Activated CD4-positive, alpha-beta T cell treated with anti-CD3 and anti-CD28 coated beads, Interleukin-2, amount 10 ng/mL, durations not matched to agents 24 days and 14 days (primary cell): ENCODE measurements at regions of chr2 and their contacts with region 1.

Region 1: GRCh38 chr2:12716282-12717190 is at the start of gene TRIB2:
- DNase-seq: peak; percentile 96
- H3K4me3 Mint-ChIP-seq: peak within 1 kb of the TSS; percentile 92
- H3K27ac Mint-ChIP-seq: peak within 1 kb of the TSS; percentile 90
- H3K4me1 Mint-ChIP-seq: peaks cover 54% of the 10 kb centered on the region
- H3K27me3 Mint-ChIP-seq: peaks cover 5% of the 10 kb centered on the region
- total RNA-seq, gene TRIB2: 4.0 and 5.1 TPM in 2 replicates

Region 2: DNA sequence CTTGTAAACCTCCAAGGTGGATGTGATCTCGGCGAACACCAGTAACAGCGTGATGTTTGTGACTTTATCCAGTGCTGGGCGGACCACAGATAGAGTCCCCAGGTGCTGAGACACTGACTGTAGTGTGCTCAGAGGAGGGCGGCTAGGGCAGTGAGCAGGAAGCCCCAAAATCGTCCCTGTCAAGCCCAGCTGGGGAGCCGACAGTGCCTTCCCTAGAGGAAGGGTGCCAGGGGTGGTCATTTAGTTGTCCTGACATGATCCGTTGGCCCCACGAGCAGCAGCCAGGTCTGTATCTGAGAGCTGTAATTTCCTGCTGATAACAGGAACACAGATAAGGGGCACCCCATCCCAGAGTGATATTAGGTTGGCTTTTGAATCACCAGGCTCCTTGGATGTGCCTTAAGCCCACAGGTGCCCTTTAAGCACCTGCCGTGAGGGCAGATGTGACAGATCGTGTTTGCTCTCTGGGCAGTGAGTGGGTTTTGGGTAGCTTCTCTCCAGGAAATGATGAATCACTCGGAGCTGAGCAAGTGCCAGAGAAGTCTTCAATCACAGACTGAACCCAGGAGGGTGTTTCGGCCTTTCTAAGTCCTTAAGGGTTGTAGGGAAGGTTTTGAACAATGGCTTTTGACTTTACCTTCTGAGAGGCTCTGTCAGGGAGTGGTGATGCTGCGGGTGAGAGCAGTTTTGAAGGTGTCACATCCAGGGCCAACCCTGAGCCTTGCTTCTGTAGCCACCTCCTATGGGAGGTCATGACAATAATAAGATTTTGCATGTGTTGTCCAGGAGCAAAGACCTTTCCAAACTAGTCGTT is 962.4 kb before region 1 on chr2:
- intact Hi-C with region 1: loop called (anchors 5 kb)
- DNase-seq: peak; percentile 87
- H3K4me3 Mint-ChIP-seq: peak overlapping the region; percentile 80
- H3K27ac Mint-ChIP-seq: peak overlapping the region; percentile 89
- H3K4me1 Mint-ChIP-seq: peaks cover 71% of the 10 kb centered on the region
- H3K27me3 Mint-ChIP-seq: no peaks in the 10 kb centered on the region

Region 3: DNA sequence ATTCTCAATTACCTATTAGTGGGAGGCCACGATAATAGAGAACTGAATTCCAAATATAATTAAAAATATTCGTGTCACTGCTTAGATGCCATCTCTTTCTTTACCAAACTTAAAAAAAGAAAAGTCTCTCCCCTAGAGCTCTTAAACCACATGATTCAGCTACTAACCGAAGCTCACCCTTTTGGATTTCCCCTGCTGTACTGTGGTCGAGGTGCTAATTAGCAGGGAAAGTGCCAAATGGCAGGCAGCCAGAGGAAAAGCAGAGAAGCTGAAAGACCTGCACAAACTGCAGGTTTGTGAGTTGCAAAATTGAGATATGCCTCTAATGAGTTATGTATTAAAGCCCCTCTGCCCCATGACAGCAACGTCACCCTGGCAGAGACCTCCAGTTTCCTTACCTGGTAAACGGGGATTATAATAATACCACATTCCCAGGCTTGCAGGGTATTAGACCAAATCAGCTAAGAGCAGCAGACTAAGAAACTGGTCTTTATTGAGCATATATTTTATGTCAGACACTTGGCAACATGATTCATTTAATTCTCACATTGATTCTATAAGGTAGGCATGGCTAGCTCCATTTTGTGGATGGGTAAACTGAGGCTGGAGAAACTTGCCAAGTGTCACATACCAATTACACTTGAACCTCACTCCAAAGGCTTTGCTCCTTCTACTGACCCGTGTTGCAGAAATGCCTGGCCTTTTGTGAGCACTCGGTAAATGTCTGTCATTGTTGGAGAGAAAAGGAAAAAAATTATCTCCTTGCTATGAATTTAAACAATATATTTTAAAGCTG is 710.5 kb before region 1 on chr2:
- intact Hi-C with region 1: loop called (anchors 2 kb)
- DNase-seq: peak; percentile 86
- H3K4me3 Mint-ChIP-seq: no peak overlapping the region
- H3K27ac Mint-ChIP-seq: no peak overlapping the region
- H3K4me1 Mint-ChIP-seq: peaks cover 8% of the 10 kb centered on the region
- H3K27me3 Mint-ChIP-seq: peaks cover 63% of the 10 kb centered on the region

Region 4: GRCh38 chr2:12293874-12294273 is 422.7 kb before region 1 on chr2:
- intact Hi-C with region 1: loop called (anchors 2 kb)
- DNase-seq: peak; percentile 80
- H3K4me3 Mint-ChIP-seq: peak overlapping the region; percentile 34
- H3K27ac Mint-ChIP-seq: peak overlapping the region; percentile 82
- H3K4me1 Mint-ChIP-seq: peaks cover 46% of the 10 kb centered on the region
- H3K27me3 Mint-ChIP-seq: peaks cover 10% of the 10 kb centered on the region

Region 5: GRCh38 chr2:12456293-12457151 is 260.0 kb before region 1 on chr2:
- intact Hi-C with region 1: loop called (anchors 1 kb)
- DNase-seq: peak; percentile 85
- H3K4me3 Mint-ChIP-seq: peak overlapping the region; percentile 78
- H3K27ac Mint-ChIP-seq: peak overlapping the region; percentile 82
- H3K4me1 Mint-ChIP-seq: peaks cover 30% of the 10 kb centered on the region
- H3K27me3 Mint-ChIP-seq: no peaks in the 10 kb centered on the region

Region 6: DNA sequence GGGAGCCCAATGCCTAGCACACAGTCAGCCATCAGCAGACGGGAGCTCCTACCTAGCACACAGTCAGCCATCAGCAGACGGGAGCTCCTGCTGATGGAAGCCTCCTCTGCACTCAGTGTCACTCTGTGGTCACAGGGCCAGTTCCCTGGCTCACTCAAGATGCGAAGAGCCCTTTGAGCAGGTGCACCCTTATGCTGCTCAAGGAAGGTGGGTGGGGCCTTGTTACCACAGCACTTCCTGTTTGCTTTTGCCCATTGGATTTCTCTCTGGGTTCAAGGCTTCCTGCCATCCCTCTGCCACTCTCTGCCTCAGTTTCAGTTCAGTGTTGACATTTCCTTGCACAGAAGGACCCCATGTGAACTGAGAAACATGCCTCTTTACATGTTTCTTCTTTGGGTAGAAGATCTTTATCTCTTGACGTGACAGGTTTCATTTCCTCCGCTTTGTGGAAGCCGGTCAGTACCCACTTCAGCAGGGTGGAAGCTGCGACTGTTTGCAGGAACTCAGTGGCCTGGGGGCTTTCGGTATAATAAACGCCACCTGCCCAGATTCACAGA is 11.8 kb after region 1 on chr2:
- intact Hi-C with region 1: loop called (anchors 1 kb)
- DNase-seq: peak; percentile 89
- H3K4me3 Mint-ChIP-seq: peak overlapping the region; percentile 67
- H3K27ac Mint-ChIP-seq: peak overlapping the region; percentile 67
- H3K4me1 Mint-ChIP-seq: peaks cover 63% of the 10 kb centered on the region
- H3K27me3 Mint-ChIP-seq: no peaks in the 10 kb centered on the region

Region 7: DNA sequence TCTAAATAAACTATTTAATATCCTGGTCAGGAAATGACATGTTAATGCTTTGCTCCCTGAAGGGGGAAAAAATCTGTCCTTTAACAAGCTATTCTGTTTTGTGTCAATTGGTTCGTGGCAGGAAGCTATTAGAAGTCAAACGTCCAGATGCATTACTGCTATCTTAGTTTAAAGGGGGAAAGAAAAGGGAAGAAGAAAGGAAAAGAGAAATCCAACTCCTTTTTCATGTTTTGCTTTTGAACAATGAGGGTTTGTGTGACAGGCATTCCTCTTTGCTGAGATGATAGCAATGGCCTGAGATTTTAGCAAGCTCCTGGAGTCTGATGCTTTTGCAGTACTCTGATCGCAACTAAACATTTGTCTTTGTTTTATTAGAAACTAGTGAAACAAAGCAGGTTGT is 24.8 kb after region 1 on chr2:
- intact Hi-C with region 1: no loop called
- DNase-seq: no peak
- H3K4me3 Mint-ChIP-seq: no peak overlapping the region
- H3K27ac Mint-ChIP-seq: no peak overlapping the region
- H3K4me1 Mint-ChIP-seq: peaks cover 7% of the 10 kb centered on the region
- H3K27me3 Mint-ChIP-seq: peaks cover 2% of the 10 kb centered on the region

Region 8: DNA sequence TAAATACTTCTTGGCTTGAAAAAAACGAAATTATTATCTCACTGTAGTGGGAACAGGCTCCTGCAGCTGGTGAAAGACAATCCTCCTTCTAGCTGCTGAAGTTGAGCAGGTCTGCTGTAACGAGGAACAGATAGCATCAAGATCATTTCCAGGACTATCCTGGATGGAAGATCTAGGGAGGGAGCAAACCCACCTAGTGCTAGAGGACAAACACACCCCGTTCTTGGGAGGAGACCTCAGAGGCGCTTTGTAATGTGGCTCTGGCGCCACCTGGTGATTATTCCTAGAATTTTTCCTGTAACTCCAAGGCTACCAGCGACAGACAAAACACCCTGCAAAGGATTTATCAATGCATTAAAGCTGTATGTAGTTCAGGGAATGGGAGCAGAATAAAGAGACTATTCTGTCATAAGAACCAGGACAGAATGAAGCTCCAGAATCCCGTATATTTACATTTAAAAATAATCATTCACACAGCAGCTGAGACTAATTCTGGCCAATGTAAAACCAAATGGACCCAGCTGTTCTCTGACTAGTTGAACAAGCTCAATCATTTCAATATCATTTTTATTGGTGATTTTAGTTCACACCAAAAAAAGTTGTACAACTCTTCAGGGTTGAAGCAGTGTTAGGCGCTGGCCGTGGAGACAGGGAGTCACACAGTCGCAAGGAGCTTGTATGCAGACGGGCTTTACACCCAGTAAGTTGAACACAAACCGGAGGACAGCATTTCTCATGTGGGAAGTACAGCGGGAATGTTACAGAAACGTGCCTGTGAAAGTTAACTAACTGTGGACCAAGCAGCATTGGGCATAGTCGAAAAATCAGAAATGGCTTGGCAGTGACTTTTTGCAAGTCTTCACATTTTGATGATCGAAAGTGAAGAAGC is 290.5 kb after region 1 on chr2:
- intact Hi-C with region 1: loop called (anchors 2 kb)
- DNase-seq: peak; percentile 88
- H3K4me3 Mint-ChIP-seq: no peak overlapping the region
- H3K27ac Mint-ChIP-seq: no peak overlapping the region
- H3K4me1 Mint-ChIP-seq: no peaks in the 10 kb centered on the region
- H3K27me3 Mint-ChIP-seq: peaks cover 45% of the 10 kb centered on the region